Left colon (tissue), 2 donors: ENCODE measurements at regions of chr18 and their contacts with region 1.

Region 1: DNA sequence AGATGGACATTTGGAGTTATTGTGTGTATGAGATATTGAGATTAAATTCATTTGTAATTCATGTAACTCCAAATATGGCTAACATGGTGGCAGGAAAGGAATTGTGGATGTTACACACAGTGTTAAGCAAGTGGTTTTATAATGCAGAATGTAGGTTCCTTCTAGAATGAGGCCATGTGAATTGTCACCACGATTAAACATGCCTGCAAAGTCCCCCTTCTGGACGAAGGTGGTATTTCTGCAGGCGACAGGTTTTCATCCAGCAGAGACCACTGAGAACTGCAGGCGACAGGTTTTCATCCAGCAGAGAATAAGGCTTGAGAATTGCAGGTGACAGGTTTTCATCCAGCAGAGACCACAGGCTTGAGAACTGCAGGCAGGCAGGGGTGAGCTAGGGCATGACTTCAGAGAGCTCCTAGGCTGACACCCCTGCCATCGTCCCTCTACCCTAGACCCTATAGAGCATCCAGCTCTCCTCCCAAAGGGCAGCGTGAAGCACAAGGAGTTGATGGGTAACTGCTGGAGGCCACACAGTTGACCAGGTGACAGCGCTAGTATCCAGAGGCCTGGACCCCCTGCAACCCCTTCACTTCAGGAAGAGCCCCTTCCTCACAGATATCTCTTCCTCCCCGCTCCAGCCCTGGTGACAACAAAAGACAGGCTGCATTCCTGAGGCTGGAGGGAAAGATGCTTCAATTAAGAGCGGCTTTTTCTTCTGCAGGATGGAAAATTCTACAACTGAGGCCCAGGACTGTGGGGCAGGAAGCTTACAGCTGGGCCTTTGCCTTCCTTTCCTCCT is 175.8 kb downstream of the LOXHD1 start:
- DNase-seq: peak in 1 of 2 donors; percentile 65
- ATAC-seq: peak; percentile 64

Region 2: DNA sequence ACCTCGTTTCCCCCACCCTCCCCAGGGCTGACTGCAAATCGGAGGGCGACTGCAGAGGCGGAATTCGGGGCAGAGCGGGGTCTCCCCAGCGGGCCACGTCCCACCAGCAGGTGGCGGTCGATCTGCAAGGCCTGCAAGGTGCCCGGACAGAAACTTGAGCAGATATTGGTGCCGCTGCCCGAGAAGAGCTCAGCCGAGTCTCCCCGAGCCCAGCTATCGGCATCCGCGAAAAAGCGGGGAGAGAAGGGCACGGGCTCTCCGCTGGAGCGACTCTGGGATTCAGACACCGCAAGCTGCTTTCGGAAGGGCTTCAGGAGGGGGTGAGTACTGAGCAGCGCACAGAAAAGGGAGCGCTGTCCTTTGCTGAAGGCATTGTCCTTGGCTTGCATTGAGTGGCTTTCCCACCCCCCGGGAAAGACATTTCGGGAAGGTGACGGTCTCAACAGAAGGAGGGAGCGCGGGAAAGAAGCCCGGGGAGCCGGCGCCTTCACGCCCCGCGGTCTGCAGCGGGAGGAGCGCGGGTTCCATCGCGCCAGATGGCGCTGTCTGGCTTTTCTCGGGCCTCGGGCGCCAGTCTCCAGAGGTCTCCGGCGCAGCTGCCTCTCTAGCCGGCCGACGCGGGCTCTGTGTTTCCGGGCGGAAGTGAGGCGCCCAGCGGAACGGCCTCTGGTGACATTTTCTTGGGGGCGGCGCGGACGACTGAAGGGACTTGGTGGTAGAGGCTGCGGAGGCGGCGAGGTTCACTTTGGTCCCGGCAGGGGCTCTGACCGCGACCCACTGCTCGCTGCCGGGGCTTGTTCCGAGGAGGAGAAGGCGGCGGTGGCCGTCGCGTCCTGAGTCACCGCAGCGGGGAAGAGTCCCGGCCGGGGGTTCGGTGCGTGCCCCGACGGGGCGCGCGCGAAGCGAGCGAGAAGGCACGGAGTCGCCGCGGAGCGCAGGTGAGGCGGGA is 307.6 kb before region 1 on chr18:
- intact Hi-C with region 1: loop called in 1 of 2 experiments (anchors 5 kb)
- DNase-seq: peak; percentile 92 to 96
- ATAC-seq: peak; percentile 95

Region 3: GRCh38 chr18:46281185-46282176 is 199.8 kb before region 1 on chr18:
- intact Hi-C with region 1: loop called in 1 of 2 experiments (anchors 2 kb)
- DNase-seq: peak in 1 of 2 donors; percentile 71
- ATAC-seq: peak; percentile 92

Region 4: DNA sequence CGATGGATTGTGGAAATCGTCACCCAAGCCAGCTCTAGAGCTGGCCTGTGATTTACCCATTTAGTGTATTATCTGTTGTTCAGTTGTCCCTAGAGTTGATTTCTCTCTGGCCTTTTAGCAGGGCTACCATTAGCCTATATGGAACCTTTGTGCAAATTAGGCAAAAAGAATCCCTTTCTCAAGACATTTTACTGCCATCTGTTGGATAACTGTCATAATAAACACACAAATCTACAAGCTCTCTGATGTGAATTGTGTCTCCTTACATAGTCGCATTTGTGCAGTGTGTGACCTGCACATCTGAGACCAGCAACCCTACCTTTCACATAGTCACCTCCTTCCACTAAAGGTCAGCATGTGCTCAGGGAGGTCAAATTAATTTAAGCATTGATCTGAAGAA is 141.8 kb after region 1 on chr18:
- intact Hi-C with region 1: no loop called
- DNase-seq: no peak
- ATAC-seq: no peak